MCF 10A (cell line): ENCODE measurements at regions of chr21 and their contacts with region 1.

Region 1: DNA sequence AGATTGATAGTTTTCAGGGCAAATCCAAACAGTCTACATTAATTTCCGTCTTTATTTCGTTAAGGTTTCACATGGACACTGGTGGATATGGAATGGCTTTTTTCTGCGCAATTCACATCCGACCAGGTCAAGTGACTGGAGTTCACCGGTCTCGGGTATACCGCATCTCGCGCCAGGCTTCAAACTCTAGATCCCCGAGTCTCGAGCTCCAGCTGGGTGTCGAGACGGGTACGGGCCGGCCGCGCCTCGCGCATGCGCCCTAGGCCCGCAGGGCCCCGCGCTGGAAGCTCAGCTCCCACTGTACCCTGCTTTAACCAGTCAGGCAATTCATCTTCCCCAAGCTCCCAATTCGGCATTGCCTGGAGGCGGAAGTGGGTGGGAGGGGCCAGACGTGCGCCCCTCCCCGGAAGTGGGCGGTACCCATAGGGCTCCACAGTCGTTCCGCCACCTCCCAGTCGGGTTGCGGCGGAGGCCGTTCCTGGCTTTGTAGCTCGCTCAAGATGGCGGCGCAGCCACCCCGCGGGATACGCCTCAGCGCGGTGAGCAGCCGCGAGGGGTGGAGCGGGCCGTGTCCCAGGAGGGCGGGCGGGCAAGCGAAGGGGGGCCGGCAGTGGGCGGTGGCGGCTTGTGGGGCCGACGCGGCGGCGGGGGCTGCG is at the start of gene MORC3:
- DNase-seq: peak; percentile 99
- H3K4me3 Mint-ChIP-seq: peak within 1 kb of the TSS; percentile 82
- H3K27ac Mint-ChIP-seq: peak within 1 kb of the TSS; percentile 95
- H3K4me1 Mint-ChIP-seq: peaks cover 21% of the 10 kb centered on the region
- H3K27me3 Mint-ChIP-seq: no peaks in the 10 kb centered on the region
- CTCF ChIP-seq: no peak
- total RNA-seq, gene MORC3: 31.1 and 32.3 TPM in 2 replicates

Region 2: DNA sequence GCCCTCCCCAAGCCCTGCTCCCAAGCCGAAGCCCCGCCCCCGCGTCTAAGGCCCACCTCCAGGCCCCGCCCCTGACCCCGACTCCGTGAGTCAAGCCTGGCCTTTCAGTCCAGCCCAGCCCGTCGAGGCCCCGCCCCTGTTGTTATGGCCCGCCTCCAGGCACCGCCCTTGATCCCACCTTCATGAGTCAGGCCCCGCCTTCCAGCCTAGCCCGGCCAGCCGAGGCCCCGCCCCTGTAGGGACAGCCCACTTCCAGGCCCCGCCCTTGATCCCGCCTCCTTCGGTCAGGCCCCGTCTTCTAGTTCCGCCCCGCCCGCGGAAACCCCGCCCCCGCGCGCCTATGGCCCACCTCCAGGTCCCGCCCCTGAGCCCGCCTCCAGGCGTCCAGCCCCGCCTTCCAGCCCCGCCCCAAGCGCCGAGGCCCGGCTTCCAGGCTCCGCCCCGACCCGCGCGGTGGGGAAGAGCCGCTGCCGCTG is 163.5 kb before region 1 on chr21:
- CTCF ChIA-PET with region 1: interaction called, 7 read pairs
- POLR2A ChIA-PET with region 1: interaction called, 20 read pairs
- intact Hi-C with region 1: no loop called
- DNase-seq: peak; percentile 99
- H3K4me3 Mint-ChIP-seq: peak overlapping the region; percentile 70
- H3K27ac Mint-ChIP-seq: no peak overlapping the region
- H3K4me1 Mint-ChIP-seq: peaks cover 11% of the 10 kb centered on the region
- H3K27me3 Mint-ChIP-seq: no peaks in the 10 kb centered on the region
- CTCF ChIP-seq: no peak

Region 3: GRCh38 chr21:36260030-36260787 is 59.7 kb before region 1 on chr21:
- CTCF ChIA-PET with region 1: interaction called, 6 read pairs
- POLR2A ChIA-PET with region 1: interaction called, 16 read pairs
- intact Hi-C with region 1: no loop called
- DNase-seq: peak; percentile 72
- H3K4me3 Mint-ChIP-seq: peak overlapping the region; percentile 75
- H3K27ac Mint-ChIP-seq: peak overlapping the region; percentile 82
- H3K4me1 Mint-ChIP-seq: no peaks in the 10 kb centered on the region
- H3K27me3 Mint-ChIP-seq: no peaks in the 10 kb centered on the region
- CTCF ChIP-seq: peak; percentile 54

Region 4: GRCh38 chr21:36297921-36298594 is 21.8 kb before region 1 on chr21:
- CTCF ChIA-PET with region 1: interaction called, 9 read pairs
- POLR2A ChIA-PET with region 1: interaction called, 66 read pairs
- intact Hi-C with region 1: no loop called
- DNase-seq: peak; percentile 22
- H3K4me3 Mint-ChIP-seq: peak overlapping the region; percentile 28
- H3K27ac Mint-ChIP-seq: peak overlapping the region; percentile 83
- H3K4me1 Mint-ChIP-seq: peaks cover 19% of the 10 kb centered on the region
- H3K27me3 Mint-ChIP-seq: no peaks in the 10 kb centered on the region
- CTCF ChIP-seq: no peak

Region 5: DNA sequence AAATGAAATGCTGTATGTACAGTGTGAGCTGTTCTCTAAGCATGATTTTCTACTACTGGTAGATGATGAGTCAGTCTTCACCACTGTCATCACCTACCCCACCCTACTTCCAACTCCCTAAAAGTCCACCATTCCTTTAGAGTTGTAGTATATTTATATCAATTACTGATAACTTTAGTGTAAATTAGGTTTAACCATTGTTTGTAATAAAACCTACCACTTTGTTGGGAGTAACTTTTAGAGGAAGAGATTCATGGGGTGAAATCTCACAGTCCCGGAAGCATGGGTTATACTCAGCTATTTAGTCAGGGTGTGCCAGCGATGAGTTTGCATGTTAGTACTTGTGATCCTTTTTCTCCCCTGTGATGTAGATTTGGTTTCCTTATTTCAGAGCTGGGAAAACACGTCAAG is 17.2 kb after region 1 on chr21:
- CTCF ChIA-PET with region 1: interaction called, 4 read pairs
- POLR2A ChIA-PET with region 1: interaction called, 114 read pairs
- intact Hi-C with region 1: no loop called
- DNase-seq: peak; percentile 76
- H3K4me3 Mint-ChIP-seq: peak overlapping the region; percentile 64
- H3K27ac Mint-ChIP-seq: peak overlapping the region; percentile 100
- H3K4me1 Mint-ChIP-seq: peaks cover 18% of the 10 kb centered on the region
- H3K27me3 Mint-ChIP-seq: no peaks in the 10 kb centered on the region
- CTCF ChIP-seq: no peak

Region 6: DNA sequence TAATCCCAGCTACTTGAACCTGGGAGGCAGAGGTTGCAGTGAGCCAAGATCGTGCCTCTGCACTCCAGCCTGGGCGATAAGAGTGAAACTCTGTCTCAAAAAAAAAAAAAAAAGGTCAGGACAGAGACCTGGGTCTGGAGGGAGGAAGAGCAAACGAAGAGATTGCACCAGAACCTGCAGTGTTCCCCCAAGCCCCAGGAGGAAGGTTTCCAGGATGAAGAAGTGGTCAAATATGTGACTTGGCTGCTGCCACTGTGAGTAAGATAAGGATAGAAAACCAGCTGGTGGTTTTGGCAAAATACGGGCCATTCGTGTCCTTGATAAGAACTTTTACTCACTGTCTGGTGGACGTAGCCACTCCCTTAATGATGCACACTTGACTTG is 117.8 kb after region 1 on chr21:
- CTCF ChIA-PET with region 1: no interaction called
- POLR2A ChIA-PET with region 1: no interaction called
- intact Hi-C with region 1: no loop called
- DNase-seq: no peak
- H3K4me3 Mint-ChIP-seq: no peak overlapping the region
- H3K27ac Mint-ChIP-seq: no peak overlapping the region
- H3K4me1 Mint-ChIP-seq: peaks cover 22% of the 10 kb centered on the region
- H3K27me3 Mint-ChIP-seq: no peaks in the 10 kb centered on the region
- CTCF ChIP-seq: no peak

Region 7: GRCh38 chr21:36487641-36488307 is 167.9 kb after region 1 on chr21:
- CTCF ChIA-PET with region 1: no interaction called
- POLR2A ChIA-PET with region 1: no interaction called
- intact Hi-C with region 1: no loop called
- DNase-seq: peak; percentile 77
- H3K4me3 Mint-ChIP-seq: no peak overlapping the region
- H3K27ac Mint-ChIP-seq: no peak overlapping the region
- H3K4me1 Mint-ChIP-seq: peaks cover 7% of the 10 kb centered on the region
- H3K27me3 Mint-ChIP-seq: no peaks in the 10 kb centered on the region
- CTCF ChIP-seq: no peak